Endothelial cell of umbilical vein (primary cell): ENCODE measurements at regions of chr3 and their contacts with region 1.

Region 1: DNA sequence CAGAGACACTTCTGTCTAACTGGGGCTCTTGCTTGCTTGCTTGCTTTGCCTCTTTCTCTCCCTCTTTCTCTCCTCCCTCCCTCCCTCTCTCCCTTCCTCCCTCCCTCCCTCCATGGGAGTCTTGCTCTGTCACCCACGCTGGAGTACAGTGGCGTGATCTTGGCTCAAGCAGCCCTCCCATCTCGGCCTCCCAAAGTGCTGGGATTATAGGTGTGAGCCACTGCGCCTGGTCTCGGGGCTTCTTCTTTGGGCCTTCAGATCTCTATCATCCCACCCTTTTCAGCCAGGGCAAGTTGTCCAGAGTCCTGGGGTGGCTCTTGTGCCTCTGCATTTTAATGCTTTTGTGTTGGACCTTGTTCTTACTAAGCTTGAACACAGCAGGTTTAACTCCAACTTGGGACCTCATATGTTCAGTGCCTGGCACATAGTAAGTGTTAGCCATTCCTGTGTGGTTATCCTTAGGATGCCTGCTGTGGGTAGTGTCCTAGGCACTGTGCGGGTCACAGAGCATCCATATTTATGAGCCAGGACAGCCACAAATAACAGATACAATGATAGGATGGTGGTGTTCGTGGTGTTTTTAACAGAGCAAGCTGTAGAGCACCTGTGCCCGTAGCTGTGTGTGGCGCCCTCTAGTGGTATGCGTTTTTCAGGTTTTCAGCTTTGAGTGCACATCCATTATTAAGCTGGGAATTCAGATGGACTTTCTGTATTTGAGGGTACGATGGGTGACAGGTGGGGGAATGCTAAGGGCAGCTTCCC is 75.1 kb downstream of the CCK start:
- DNase-seq: peak; percentile 77
- H3K4me3 ChIP-seq: no peak overlapping the region
- H3K27ac ChIP-seq: no peak overlapping the region
- H3K4me1 ChIP-seq: peaks cover 11% of the 10 kb centered on the region
- H3K27me3 ChIP-seq: no peaks in the 10 kb centered on the region
- CTCF ChIP-seq: peak; percentile 74 to 83
- POLR2A ChIP-seq: no peak

Region 2: DNA sequence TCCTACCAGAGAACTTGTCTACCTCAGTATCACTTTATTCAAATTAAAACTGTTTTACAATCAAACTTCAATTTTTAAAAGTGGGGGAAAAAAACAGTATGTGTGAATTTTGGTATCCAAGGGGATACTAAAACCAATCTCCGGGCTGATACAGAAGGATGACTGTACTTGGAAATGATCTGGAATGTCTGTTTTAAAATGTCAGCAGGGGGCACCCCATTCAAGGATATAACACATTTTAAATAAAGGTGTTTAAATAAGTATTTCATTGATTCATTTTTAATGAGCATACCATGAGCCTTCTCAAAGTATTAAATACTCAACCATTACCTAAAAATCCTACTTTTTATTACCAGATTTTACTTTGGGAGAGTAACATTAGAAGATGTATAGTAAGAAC is 296.9 kb before region 1 on chr3:
- CTCF ChIA-PET with region 1: interaction called, 52 read pairs
- POLR2A ChIA-PET with region 1: no interaction called
- dilution Hi-C with region 1: no loop called
- intact Hi-C with region 1: loop called (anchors 1 kb)
- DNase-seq: peak; percentile 75
- H3K4me3 ChIP-seq: no peak overlapping the region
- H3K27ac ChIP-seq: no peak overlapping the region
- H3K4me1 ChIP-seq: no peaks in the 10 kb centered on the region
- H3K27me3 ChIP-seq: no peaks in the 10 kb centered on the region
- CTCF ChIP-seq: peak; percentile 14 to 22
- POLR2A ChIP-seq: no peak

Region 3: DNA sequence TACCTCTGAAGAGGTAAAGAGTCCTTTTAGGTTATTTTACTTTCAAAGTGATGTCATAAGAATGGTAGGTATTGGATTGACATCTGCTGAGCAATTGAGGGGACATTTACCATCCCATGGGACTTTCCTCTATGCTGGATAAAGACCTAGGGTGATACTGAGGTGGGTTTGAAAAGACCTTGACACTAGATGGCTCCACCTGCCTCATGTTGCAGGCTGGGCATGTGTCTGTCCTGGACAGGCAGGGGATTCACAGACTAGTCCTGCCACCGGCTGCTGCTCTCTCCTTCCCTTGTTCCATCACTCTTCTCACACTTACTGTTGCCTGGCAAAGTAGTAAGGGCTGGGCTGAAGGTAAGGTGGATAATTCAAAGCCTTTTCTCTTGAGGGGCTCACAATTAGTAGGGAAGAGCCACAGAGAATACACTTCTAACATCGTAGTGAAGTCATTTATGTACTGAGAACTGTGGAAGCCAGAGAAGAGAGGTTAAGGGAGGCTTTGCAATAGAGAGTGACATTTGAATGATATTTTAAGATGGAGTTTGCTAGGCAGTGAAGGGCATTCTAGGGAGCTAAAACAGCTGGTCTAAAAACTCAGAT is 72.0 kb before region 1 on chr3:
- CTCF ChIA-PET with region 1: interaction called, 318 read pairs
- POLR2A ChIA-PET with region 1: interaction called, 13 read pairs
- dilution Hi-C with region 1: no loop called
- intact Hi-C with region 1: loop called (anchors 1 kb)
- DNase-seq: peak; percentile 75
- H3K4me3 ChIP-seq: no peak overlapping the region
- H3K27ac ChIP-seq: peak overlapping the region; percentile 77
- H3K4me1 ChIP-seq: peaks cover 48% of the 10 kb centered on the region
- H3K27me3 ChIP-seq: no peaks in the 10 kb centered on the region
- CTCF ChIP-seq: peak; percentile 39 to 50
- POLR2A ChIP-seq: no peak

Region 4: GRCh38 chr3:42129014-42129953 is 61.6 kb before region 1 on chr3:
- CTCF ChIA-PET with region 1: interaction called, 16 read pairs
- POLR2A ChIA-PET with region 1: no interaction called
- dilution Hi-C with region 1: no loop called
- intact Hi-C with region 1: no loop called
- DNase-seq: no peak
- H3K4me3 ChIP-seq: no peak overlapping the region
- H3K27ac ChIP-seq: no peak overlapping the region
- H3K4me1 ChIP-seq: no peaks in the 10 kb centered on the region
- H3K27me3 ChIP-seq: no peaks in the 10 kb centered on the region
- CTCF ChIP-seq: no peak
- POLR2A ChIP-seq: no peak

Region 5: GRCh38 chr3:42159706-42160472 is 31.0 kb before region 1 on chr3:
- CTCF ChIA-PET with region 1: interaction called, 30 read pairs
- POLR2A ChIA-PET with region 1: no interaction called
- dilution Hi-C with region 1: no loop called
- intact Hi-C with region 1: no loop called
- DNase-seq: peak; percentile 36
- H3K4me3 ChIP-seq: peak overlapping the region in 1 of 3 experiments; percentile 51
- H3K27ac ChIP-seq: peak overlapping the region; percentile 85
- H3K4me1 ChIP-seq: peaks cover 34% of the 10 kb centered on the region
- H3K27me3 ChIP-seq: no peaks in the 10 kb centered on the region
- CTCF ChIP-seq: no peak
- POLR2A ChIP-seq: no peak

Region 6: DNA sequence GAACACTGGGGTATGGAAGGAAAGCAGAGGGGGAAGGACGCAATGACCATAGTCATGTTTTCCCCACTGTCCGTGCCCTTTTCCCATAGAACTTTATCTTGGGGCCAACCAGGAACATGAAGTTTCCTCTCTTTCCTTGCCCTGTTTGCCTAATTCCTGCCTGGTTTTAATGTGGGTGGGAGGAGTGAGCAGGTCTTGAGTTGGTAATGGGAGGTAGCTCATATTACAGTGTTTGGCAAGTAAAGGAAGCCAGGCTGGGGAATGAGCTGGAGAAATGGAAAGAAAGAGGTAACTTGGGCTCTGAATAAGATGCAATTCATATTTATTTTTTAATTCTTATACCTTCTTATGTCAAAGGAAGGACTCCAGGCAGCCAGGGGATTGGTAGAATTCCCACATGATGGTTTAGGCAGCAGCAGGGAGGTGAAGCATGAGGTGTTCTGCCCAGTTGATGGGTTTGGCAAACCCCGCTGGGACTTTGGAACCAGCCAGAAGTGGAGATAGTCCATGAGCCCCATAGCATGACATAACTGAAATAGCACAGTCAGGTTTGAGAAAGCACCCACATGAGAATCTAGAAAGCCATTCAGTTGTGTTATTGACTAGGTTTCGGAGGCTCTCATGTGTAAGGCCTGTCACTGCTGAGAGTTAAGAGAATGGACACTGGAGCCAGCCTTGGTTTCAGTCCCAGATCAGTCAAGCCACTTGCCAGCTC is 15.1 kb after region 1 on chr3:
- CTCF ChIA-PET with region 1: interaction called, 31 read pairs
- POLR2A ChIA-PET with region 1: no interaction called
- dilution Hi-C with region 1: no loop called
- intact Hi-C with region 1: no loop called
- DNase-seq: no peak
- H3K4me3 ChIP-seq: no peak overlapping the region
- H3K27ac ChIP-seq: no peak overlapping the region
- H3K4me1 ChIP-seq: no peaks in the 10 kb centered on the region
- H3K27me3 ChIP-seq: no peaks in the 10 kb centered on the region
- CTCF ChIP-seq: no peak
- POLR2A ChIP-seq: no peak

Region 7: GRCh38 chr3:42345811-42346210 is 154.9 kb after region 1 on chr3:
- CTCF ChIA-PET with region 1: no interaction called
- POLR2A ChIA-PET with region 1: no interaction called
- dilution Hi-C with region 1: no loop called
- intact Hi-C with region 1: no loop called
- DNase-seq: no peak
- H3K4me3 ChIP-seq: no peak overlapping the region
- H3K27ac ChIP-seq: no peak overlapping the region
- H3K4me1 ChIP-seq: no peaks in the 10 kb centered on the region
- H3K27me3 ChIP-seq: peaks cover 1 to 3% of the 10 kb centered on the region in 2 experiments
- CTCF ChIP-seq: no peak
- POLR2A ChIP-seq: no peak

Region 8: DNA sequence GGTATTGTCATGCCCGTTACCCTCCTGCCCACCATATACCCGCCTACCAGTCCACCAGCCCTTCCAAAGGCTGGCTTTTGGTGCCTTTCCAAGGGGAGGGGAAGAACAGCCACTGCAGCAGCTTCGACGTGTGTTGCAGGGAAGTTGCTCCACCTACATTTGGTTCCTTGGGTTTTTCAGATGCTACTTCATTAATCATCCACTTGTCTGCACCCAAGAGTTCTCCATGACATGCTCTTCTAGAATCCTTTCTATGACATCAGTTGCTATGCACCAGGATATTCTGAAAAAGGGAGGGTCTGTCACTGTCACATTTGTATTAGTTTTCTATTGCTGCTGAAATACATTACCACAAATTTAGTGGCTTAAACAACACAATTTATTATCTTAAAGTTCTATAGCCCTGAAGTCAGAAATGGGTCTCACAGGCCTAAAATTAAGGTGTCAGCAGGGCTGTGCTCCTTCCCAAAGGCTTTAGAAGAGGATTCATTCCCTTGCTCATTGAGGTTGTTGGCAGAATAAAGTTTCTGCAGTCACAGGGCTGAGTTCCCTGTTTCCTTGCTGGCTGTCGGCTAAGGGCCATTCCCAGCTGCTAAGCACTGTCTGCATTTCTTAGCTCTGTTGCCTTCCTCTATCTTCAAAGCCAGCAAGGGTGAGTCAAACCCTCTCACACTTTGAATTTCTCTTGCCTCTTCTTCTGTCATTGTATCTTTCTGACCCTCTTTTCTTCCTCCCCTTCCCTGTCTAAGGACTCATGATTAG is 219.7 kb after region 1 on chr3 and contains the start of gene LYZL4:
- CTCF ChIA-PET with region 1: no interaction called
- POLR2A ChIA-PET with region 1: no interaction called
- dilution Hi-C with region 1: no loop called
- intact Hi-C with region 1: no loop called
- DNase-seq: no peak
- H3K4me3 ChIP-seq: no peak within 1 kb of the TSS
- H3K27ac ChIP-seq: no peak within 1 kb of the TSS
- H3K4me1 ChIP-seq: no peaks in the 10 kb centered on the region
- H3K27me3 ChIP-seq: no peaks in the 10 kb centered on the region
- CTCF ChIP-seq: no peak
- POLR2A ChIP-seq: no peak
- total RNA-seq, gene LYZL4: not detected in 2 replicates